Posterior vena cava (tissue), 2 donors: ENCODE measurements at regions of chr4 and their contacts with region 1.

Region 1: DNA sequence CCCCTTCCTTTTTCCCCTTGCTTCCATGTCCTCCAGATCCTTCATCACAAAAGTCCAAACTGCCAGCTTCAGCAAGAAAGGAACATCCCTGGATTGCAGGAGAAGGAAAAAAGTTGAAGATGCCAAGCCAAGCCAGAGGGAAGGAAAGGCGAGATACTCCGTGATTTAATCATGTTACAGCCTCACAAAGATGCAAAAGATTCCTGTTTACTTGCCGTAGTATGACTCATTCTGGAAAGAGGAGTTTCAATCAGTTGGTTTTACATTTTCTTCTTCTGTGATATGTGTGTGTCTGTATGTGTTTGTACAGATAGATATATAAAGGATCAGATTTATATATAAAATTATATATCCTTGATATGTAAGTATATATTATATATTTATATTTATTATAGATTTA is 69.3 kb downstream of the BTC start:
- DNase-seq: no peak

Region 2: DNA sequence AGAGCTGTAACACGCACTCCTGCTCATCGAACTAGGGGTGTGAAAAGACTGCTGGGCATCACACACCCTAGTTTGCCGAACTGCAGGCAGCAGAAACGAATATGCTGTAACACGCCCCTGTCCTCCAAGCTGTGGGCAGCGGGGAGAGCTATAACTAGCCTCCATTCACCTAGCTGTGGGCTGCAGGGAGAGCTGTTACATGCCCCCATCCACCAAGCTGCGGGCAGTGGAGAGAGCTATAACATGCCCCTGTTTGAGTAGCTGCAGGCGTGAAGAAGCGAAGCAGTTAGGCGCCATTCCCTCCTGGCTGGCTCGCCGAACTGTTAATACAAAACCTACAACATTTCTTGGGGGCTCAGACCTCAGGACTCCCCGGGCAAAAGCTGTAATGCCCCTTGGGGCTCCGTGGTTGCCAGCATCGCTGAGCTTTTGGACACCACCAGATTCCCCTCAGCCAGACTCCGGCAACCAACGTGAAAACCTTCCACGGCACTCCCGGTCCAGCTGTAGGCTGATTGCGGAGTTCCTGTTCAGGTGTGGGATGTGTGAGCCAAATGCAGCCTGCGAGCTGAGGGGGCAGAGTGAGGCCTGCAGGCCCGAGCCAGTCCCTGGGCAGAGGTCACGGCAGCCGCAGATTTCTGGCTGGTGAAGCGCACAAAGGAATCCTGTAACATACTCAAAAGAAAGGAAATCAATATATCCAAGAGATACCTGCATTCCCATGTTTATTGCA is 1425.3 kb before region 1 on chr4:
- intact Hi-C with region 1: no loop called
- DNase-seq: no peak

Region 3: DNA sequence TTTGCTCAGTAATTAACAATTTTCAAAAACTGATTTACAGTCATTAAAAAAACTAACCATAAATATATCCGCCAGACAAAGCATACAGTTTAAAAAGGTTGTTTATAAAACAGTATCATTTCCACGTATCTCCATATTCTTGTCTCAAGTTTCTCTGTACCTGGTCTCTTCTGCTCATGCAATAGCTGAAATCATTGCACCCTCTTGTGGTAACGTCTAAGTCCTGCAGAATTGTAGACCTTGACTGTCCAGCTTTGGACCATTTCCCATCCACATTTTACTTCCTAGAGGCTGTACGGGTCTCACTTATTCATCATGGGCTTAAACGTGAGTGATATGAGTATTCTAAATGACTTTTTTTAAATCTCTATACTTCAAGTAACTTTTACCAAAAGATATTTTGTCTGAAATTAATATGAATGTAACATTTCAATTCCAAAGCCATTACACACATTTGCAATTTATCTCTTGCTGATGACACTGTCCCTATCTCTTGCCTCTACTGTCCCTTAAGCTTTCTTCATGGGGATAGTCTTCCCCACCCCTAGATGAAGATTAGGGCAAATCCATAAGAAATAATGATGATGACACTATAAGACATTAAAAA is 49.2 kb before region 1 on chr4:
- intact Hi-C with region 1: no loop called
- DNase-seq: no peak

Region 4: GRCh38 chr4:74738470-74739140 is 13.6 kb after region 1 on chr4:
- intact Hi-C with region 1: loop called in 1 of 2 experiments (anchors 1 kb)
- DNase-seq: no peak